Psoas muscle (tissue), 8 donors: ENCODE measurements at regions of chr1 and their contacts with region 1.

Region 1: GRCh38 chr1:155063550-155064110 is at the start of gene EFNA4:
- DNase-seq: peak; percentile 81 to 86
- ATAC-seq: peak; percentile 79 to 92 (median 85)
- H3K4me3 ChIP-seq: peak within 1 kb of the TSS; percentile 97
- H3K27ac ChIP-seq: peak within 1 kb of the TSS; percentile 65
- H3K4me1 ChIP-seq: peaks cover 19% of the 10 kb centered on the region
- H3K27me3 ChIP-seq: no peaks in the 10 kb centered on the region
- CTCF ChIP-seq: no peak
- total RNA-seq, gene EFNA4: 0.69 to 1.1 (median 0.77) TPM

Region 2: GRCh38 chr1:154371436-154371835 is 692.2 kb before region 1 on chr1:
- intact Hi-C with region 1: no loop called
- DNase-seq: no peak
- ATAC-seq: no peak
- H3K4me3 ChIP-seq: no peak overlapping the region
- H3K27ac ChIP-seq: no peak overlapping the region
- H3K4me1 ChIP-seq: no peaks in the 10 kb centered on the region
- H3K27me3 ChIP-seq: no peaks in the 10 kb centered on the region
- CTCF ChIP-seq: no peak

Region 3: DNA sequence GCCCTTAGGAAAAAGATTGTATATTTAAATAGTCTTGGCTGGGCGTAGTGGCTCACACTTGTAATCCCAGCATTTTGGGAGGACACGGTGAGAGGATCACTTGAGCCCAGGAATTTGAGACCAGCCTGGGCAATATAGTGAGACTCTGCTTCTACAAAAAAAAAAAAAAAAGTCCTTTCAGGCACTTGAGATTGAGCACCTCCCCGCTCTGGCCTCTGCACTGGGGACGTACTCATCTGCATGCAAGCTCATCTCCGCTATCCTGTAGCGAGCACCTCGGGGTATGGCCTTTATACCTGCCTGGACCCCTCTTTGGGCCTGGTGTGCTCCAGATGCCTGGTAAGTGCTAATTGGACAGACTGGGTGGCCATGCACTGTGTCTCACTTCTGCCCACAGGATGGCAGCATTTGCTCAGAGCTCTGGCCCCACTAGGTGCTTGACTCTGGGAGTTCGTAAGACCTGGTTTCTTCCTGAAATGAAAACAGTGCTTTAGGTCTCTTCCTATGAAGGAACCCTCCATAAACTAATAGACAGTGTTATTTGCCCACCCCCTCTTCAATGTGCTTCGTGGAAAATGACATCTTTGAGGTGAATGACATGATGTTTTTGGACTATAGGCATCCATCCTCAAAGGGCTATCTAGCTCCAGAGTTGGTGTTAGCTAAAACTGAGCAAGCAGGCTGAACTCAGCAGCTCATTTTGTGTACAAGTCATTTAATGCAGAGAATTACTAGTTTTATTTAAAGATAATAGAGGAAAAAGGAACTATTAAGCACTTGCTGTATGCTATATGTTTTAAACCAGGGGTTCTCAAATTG is 394.0 kb before region 1 on chr1:
- intact Hi-C with region 1: loop called in 1 of 2 experiments (anchors 10 kb)
- DNase-seq: peak; percentile 66 to 84
- ATAC-seq: peak; percentile 98 to 100 (median 100)
- H3K4me3 ChIP-seq: no peak overlapping the region
- H3K27ac ChIP-seq: no peak overlapping the region
- H3K4me1 ChIP-seq: no peaks in the 10 kb centered on the region
- H3K27me3 ChIP-seq: no peaks in the 10 kb centered on the region
- CTCF ChIP-seq: peak; percentile 86

Region 4: DNA sequence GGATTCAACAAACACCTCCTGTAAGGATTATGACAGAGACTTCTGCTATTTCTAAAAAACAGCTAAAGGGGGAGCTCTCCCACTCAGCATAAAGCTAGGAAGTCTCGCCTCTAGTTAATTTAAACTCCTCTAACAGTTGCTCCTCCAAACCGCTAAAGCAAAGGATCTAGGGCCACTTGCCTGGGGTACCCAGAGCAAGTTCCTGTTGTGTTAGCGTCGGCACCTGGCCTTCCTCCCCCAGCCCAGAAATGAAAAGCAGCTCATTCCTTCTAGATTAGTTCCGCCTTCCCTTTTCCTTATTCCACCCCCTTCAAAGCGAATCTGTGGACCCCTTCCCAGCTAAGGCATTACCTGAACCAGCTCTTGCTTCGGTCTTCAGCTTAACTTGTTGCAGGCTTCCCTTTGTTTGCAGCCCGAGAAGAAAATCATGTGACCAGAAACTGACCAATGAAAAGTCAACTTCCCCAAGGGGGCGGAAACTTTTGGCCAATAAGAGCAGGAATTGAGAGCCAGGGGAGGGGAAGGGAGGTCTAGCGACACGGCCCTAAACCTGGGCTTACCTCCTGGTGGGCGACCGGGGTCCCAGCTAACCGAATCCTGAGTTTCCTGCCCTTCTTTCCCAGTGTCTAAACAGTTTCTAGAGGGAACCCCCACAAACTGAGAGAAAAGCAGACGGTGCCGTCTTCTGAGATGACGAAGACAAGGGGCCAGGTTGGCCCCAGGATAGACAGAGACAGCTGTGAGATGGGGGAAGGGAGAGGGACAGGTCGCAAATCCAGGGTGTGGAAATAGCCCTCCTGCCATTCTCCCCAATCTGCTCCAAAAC is 107.7 kb before region 1 on chr1 and contains the start of gene PBXIP1:
- intact Hi-C with region 1: loop called in 1 of 2 experiments (anchors 5 kb)
- DNase-seq: peak; percentile 54 to 75
- ATAC-seq: peak; percentile 87 to 91 (median 88)
- H3K4me3 ChIP-seq: peak within 1 kb of the TSS; percentile 71
- H3K27ac ChIP-seq: peak within 1 kb of the TSS; percentile 88
- H3K4me1 ChIP-seq: peaks cover 54% of the 10 kb centered on the region
- H3K27me3 ChIP-seq: no peaks in the 10 kb centered on the region
- CTCF ChIP-seq: no peak
- total RNA-seq, gene PBXIP1: 76.5 to 149 (median 104) TPM

Region 5: DNA sequence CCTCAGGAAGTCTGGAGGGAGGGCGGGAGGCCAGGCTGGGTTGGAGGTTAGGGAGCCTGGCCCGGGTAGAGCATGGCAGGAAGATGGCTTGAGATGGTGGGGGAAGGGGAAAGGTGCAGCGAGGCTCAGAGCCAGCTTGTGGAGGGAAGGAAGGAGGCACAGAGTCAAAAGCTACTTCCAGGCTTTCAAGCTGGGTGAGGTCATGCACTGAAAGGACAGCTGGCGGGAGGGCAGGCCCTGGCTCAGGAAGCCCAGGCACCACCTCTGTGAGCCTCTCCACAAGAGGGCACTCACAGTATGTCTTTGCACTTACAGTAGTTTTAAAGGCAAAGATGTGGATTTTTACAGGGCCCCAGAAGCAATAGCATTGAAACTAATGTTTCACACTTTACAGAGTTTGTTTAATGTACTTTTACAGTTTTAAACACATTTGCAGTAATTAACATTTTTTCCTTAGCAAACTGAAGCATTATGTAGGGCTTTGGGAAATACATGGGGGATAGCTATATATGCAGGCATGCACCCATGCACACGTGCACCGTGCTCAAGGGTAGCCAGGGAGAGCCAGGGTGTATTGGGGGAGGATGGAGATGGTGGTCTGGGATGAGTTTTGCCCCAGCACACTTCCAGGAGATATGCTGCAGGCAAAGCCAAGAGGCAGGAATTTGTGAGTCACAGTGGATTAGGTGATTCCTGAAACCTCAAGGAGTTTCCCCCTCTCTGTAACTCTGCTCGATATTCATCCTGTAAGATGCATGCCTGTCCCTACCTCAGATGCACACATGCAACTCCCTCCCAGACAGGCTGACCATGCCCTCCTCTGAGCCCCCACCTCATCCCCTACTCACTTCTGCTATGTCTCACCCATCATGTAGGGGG is 18.6 kb before region 1 on chr1:
- intact Hi-C with region 1: loop called in 1 of 2 experiments (anchors 1 kb)
- DNase-seq: peak; percentile 80 to 92
- ATAC-seq: peak; percentile 95 to 98 (median 97)
- H3K4me3 ChIP-seq: no peak overlapping the region
- H3K27ac ChIP-seq: peak overlapping the region; percentile 34
- H3K4me1 ChIP-seq: peaks cover 27% of the 10 kb centered on the region
- H3K27me3 ChIP-seq: no peaks in the 10 kb centered on the region
- CTCF ChIP-seq: peak; percentile 84

Region 6: GRCh38 chr1:155084722-155085503 is 21.3 kb after region 1 on chr1:
- intact Hi-C with region 1: loop called in 1 of 2 experiments (anchors 1 kb)
- DNase-seq: peak; percentile 93 to 95
- ATAC-seq: peak; percentile 88 to 92 (median 89)
- H3K4me3 ChIP-seq: peak overlapping the region; percentile 69
- H3K27ac ChIP-seq: peak overlapping the region; percentile 92
- H3K4me1 ChIP-seq: peaks cover 22% of the 10 kb centered on the region
- H3K27me3 ChIP-seq: peaks cover 0 to 41% (median 21%) of the 10 kb centered on the region in 3 donors
- CTCF ChIP-seq: peak; percentile 92